ENCODE measurements at regions of chr11 and their contacts with region 1.

Region 1: DNA sequence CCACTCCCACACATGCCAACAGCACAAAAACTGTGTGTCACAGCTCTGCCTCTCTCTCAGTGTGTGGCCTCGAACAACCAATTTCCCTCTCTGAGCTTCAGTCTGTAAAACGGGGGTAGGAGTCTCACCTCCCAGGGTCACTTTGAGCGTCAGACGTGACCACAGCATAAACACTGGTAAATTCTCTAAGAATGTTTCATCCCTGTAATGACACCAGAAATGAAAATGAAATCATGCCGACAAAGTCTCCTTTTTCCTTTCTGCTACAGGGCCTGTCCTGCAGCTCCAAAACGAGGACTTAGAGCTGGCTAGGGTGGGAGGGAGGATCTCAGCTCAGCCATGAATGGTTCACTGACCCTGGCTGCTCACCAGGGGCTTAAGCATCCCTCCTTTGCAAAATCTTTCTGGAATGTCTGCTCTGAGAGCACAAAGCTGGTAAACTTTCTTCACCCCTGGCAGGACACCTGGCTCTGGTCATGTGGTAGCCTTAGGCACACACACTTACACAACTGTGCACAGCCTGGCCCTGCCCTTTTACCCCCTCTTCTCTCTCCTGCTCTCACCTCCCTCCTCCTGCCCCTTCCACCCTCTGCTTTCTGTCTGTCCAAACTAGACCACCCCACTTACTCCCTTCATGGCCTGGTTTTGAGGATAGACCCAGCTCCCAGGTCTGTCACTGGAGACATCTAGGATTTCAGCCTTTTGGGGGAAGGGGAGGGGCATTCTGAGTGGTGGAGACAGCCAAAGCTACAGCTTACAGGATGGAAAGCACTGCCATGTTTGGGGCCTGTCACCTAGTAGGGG is 12.3 kb upstream of the TSKU start:
- DNase-seq: no peak
- H3K4me3 Mint-ChIP-seq: no peak overlapping the region
- H3K27ac Mint-ChIP-seq: peak overlapping the region; percentile 39
- H3K4me1 Mint-ChIP-seq: peaks cover 24% of the 10 kb centered on the region
- H3K27me3 Mint-ChIP-seq: no peaks in the 10 kb centered on the region

Region 2: DNA sequence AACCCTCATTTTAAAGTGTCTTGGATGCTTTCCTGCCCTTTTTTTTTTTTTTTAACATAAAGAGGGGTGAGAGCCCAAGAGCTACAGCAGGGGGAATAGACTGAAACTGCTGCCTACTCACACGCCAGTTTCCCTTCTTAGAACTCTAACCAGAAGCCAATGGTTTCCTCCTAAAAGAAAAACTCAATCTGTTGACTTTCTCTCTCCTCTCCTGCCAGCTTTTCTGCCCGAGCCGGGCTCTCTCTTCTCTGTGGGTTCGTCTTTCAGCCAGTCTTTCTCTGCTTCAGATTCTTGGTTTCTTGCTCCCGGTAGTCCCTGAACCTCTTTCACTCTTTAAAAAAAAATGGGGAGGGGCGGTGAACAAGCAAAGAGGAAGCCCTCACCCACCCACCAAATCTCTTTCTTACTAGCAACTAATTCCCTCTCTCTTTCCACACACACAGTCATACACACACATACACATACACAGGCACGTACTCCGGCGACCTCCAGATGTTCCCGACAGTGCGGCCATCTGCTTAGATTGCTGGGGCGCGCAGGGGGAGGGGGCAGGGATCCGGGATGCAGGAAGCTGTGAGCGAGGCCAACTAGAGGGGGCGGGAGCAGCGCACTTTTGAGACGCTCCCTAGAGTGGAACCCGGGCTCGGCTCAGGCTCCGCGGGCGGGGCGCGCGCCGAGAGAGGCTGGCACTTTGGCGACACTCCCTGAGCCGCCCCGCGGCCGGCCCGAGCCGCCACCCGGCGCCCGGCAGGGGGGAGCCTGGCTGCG is 11.9 kb after region 1 on chr11:
- intact Hi-C with region 1: loop called (anchors 1 kb)
- DNase-seq: peak; percentile 60
- H3K4me3 Mint-ChIP-seq: peak overlapping the region; percentile 80
- H3K27ac Mint-ChIP-seq: peak overlapping the region; percentile 76
- H3K4me1 Mint-ChIP-seq: peaks cover 22% of the 10 kb centered on the region
- H3K27me3 Mint-ChIP-seq: peaks cover 20% of the 10 kb centered on the region

Region 3: DNA sequence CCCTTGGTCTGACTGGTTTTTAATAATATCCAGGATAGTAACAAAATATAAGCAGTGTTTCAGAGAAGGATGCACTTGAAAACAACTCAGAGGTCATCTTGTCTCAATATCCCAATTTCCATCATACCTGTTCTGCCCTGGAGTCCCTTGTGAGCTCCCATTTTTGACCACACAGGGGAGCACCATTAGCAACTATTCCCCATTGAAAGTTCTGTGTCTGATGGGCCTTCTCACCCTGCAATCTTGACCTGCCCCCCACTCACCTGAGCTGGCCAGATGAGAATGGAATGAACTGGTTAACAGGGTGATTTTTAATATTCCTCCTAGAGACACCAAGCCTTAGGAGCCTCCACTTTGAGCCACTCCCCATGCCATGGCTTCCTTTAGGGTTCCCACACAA is 292.1 kb after region 1 on chr11:
- intact Hi-C with region 1: no loop called
- DNase-seq: no peak
- H3K4me3 Mint-ChIP-seq: no peak overlapping the region
- H3K27ac Mint-ChIP-seq: no peak overlapping the region
- H3K4me1 Mint-ChIP-seq: peaks cover 4% of the 10 kb centered on the region
- H3K27me3 Mint-ChIP-seq: peaks cover 23% of the 10 kb centered on the region